ENCODE measurements at regions of chr10 and their contacts with region 1.

Region 1: GRCh38 chr10:31031558-31032257 is at the start of gene ZNF438:
- DNase-seq: peak; percentile 91
- H3K4me3 ChIP-seq: peak within 1 kb of the TSS; percentile 77 to 88 (median 78)
- H3K27ac ChIP-seq: peak within 1 kb of the TSS; percentile 98
- H3K4me1 ChIP-seq: peaks cover 21% of the 10 kb centered on the region
- H3K27me3 ChIP-seq: no peaks in the 10 kb centered on the region
- CTCF ChIP-seq: peak in 1 of 2 donors; percentile 76
- total RNA-seq, gene ZNF438: 1.2 to 3.2 TPM

Region 2: GRCh38 chr10:30553625-30554439 is 477.9 kb before region 1 on chr10:
- CTCF ChIA-PET with region 1: no interaction called
- dilution Hi-C with region 1: no loop called
- in situ Hi-C with region 1: no loop called
- intact Hi-C with region 1: no loop called
- DNase-seq: no peak
- H3K4me3 ChIP-seq: no peak overlapping the region
- H3K27ac ChIP-seq: no peak overlapping the region
- H3K4me1 ChIP-seq: no peaks in the 10 kb centered on the region
- H3K27me3 ChIP-seq: no peaks in the 10 kb centered on the region
- CTCF ChIP-seq: no peak

Region 3: DNA sequence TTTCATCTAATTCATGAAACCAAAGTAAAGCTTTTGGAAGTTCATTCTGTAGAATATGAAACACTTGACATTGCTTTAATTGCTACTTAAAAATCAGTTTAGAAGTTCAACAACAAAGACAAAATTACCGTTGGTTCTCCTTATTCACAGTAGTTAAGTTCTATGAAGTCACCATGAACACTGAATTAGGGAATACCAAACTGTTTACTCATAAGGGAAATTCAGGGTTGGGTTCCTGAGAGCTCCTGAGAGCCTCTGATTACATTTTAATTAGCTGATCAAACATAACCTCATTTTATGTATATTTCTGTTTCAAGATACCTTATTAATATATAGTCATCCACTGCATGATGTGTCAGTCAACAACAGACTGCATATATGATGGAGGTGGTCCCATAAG is 46.2 kb before region 1 on chr10:
- CTCF ChIA-PET with region 1: no interaction called
- dilution Hi-C with region 1: no loop called
- in situ Hi-C with region 1: no loop called
- intact Hi-C with region 1: loop called (anchors 1 kb)
- DNase-seq: peak; percentile 72
- H3K4me3 ChIP-seq: no peak overlapping the region
- H3K27ac ChIP-seq: peak overlapping the region; percentile 85
- H3K4me1 ChIP-seq: peaks cover 29% of the 10 kb centered on the region
- H3K27me3 ChIP-seq: no peaks in the 10 kb centered on the region
- CTCF ChIP-seq: no peak

Region 4: GRCh38 chr10:31058795-31059703 is 27.3 kb after region 1 on chr10:
- CTCF ChIA-PET with region 1: no interaction called
- dilution Hi-C with region 1: no loop called
- in situ Hi-C with region 1: no loop called
- intact Hi-C with region 1: no loop called
- DNase-seq: no peak
- H3K4me3 ChIP-seq: no peak overlapping the region
- H3K27ac ChIP-seq: no peak overlapping the region
- H3K4me1 ChIP-seq: peaks cover 4% of the 10 kb centered on the region
- H3K27me3 ChIP-seq: no peaks in the 10 kb centered on the region
- CTCF ChIP-seq: no peak

Region 5: DNA sequence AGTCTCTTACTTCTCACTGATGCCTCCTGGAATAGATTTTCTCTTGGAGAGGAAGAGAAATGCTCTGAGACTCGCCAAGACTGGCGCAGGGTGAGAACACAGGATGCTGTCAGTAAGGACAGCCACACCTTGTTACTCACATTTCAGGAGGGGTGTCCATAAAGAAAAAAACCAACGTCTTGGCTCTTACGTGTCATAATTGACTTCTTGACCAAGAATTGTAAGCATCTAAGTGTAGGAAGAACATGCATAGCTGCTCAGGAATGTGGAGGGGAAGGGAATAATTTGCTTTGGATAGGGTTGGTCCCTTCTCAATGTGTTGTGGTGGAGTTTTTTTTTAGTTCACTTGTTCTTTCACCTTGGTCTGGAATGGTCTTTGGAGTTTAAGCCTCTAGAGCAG is 43.7 kb after region 1 on chr10:
- CTCF ChIA-PET with region 1: no interaction called
- dilution Hi-C with region 1: no loop called
- in situ Hi-C with region 1: no loop called
- intact Hi-C with region 1: loop called (anchors 1 kb)
- DNase-seq: peak; percentile 96
- H3K4me3 ChIP-seq: no peak overlapping the region
- H3K27ac ChIP-seq: peak overlapping the region; percentile 81
- H3K4me1 ChIP-seq: peaks cover 44% of the 10 kb centered on the region
- H3K27me3 ChIP-seq: no peaks in the 10 kb centered on the region
- CTCF ChIP-seq: no peak

Region 6: GRCh38 chr10:31318854-31319601 is 287.3 kb after region 1 on chr10 and contains the start of gene ZEB1:
- CTCF ChIA-PET with region 1: no interaction called
- dilution Hi-C with region 1: no loop called
- in situ Hi-C with region 1: no loop called
- intact Hi-C with region 1: loop called (anchors 1 kb)
- DNase-seq: peak; percentile 86
- H3K4me3 ChIP-seq: peak within 1 kb of the TSS; percentile 76 to 98 (median 98)
- H3K27ac ChIP-seq: peak within 1 kb of the TSS; percentile 72
- H3K4me1 ChIP-seq: peaks cover 21% of the 10 kb centered on the region
- H3K27me3 ChIP-seq: peaks cover 26% of the 10 kb centered on the region
- CTCF ChIP-seq: peak; percentile 12 to 54
- total RNA-seq, gene ZEB1: 1.2 to 1.3 TPM

Region 7: GRCh38 chr10:31490858-31491504 is 459.3 kb after region 1 on chr10:
- CTCF ChIA-PET with region 1: no interaction called
- dilution Hi-C with region 1: no loop called
- in situ Hi-C with region 1: no loop called
- intact Hi-C with region 1: loop called (anchors 5 kb)
- DNase-seq: peak; percentile 29
- H3K4me3 ChIP-seq: no peak overlapping the region
- H3K27ac ChIP-seq: no peak overlapping the region
- H3K4me1 ChIP-seq: no peaks in the 10 kb centered on the region
- H3K27me3 ChIP-seq: peaks cover 5% of the 10 kb centered on the region
- CTCF ChIP-seq: peak; percentile 72 to 79

Measured in mammary epithelial cell (primary cell).